Esophagus muscularis mucosa (tissue), 4 donors: ENCODE measurements at regions of chr11 and their contacts with region 1.

Region 1: DNA sequence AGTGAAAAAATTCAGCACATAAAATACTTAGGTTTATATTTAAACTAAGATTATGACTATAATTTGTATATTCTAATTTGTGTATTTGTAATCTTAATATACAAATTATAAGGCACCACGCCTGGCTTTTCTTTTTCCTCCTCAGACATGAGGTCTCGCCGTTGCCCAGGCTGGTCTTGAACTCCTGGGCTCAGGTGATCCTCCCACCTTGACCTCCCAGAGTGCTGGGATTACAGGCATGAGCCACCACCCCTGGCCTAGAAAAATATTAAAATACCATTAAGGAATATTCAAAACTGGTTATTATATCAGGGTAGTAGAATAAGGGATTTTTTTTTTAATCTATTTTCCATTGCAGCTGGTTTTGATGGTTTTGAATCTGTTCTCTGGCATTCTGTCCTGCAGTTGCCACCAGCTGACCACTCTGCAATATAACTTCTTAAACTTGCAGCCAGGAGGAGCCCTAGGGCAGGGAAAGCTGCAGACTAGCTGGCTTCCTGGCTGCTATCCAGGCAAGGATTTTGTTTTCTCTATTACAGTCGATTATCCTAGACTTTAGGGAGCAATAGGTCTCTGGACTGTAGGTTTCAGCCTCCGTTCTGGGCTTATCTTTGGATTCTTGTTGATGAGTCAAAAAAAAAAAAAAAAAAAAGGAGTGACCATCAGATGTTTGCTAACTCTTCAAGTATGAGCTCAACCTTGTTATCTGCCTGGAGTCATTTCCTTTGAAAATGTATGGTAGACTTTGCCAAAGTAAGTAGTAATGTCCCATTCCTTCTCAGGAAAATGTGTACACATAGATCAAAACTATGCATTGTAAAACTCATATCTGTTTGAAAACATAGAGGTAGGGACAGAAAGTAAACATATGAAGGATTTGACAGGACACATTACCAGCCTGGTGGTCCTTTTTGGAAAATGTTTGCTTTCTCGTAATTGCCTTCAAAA is 13.2 kb downstream of the POLA2 start:
- DNase-seq: no peak
- H3K4me3 ChIP-seq: no peak overlapping the region
- H3K27ac ChIP-seq: peak overlapping the region in 2 of 4 donors; percentile 39 to 43
- H3K4me1 ChIP-seq: peaks cover 22 to 47% (median 43%) of the 10 kb centered on the region in 4 donors
- H3K27me3 ChIP-seq: no peaks in the 10 kb centered on the region
- CTCF ChIP-seq: peak; percentile 74 to 97 (median 75)
- EP300 ChIP-seq: no peak
- POLR2A ChIP-seq: no peak

Region 2: DNA sequence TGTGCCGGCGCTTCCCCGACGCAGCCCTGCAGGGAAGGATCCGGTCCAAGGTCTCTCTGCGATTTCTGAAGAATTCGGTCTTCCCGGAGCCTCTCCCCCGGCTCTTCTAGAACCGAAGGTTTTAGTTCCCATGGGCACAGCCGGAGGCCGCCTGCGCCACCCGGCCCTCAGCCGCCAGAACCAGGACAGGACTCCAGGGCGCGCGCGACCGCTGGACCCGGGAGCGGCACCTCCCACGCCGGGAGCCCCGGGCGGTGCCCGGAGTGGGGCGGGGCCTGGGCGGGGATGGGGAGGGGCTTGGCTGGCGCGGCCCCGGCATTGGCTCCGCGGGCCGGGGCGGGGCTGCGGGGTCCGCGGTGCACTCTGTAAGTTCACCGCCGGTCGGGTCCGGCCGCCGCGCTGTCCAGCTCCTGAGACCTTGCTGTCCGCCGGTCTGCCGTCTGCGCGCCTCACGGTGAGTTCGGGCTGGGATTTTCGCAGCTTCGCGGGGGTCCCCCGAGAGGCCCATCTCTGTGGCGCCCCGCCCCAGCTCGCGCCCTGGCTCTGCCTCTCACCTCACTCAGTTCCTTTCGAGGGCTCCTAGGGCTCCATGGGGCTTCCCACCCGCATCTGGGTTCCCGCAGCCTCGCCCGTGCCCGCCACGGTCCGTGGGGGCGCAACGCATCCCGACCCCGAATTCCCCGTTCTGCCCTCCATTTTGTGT is 39.6 kb after region 1 on chr11 and contains the start of gene CDC42EP2:
- intact Hi-C with region 1: loop called (anchors 1 kb)
- DNase-seq: peak; percentile 95
- H3K4me3 ChIP-seq: peak within 1 kb of the TSS; percentile 87 to 100 (median 88)
- H3K27ac ChIP-seq: peak within 1 kb of the TSS; percentile 95 to 97 (median 96)
- H3K4me1 ChIP-seq: peaks cover 48 to 88% (median 86%) of the 10 kb centered on the region in 4 donors
- H3K27me3 ChIP-seq: no peaks in the 10 kb centered on the region
- CTCF ChIP-seq: peak in 1 of 3 experiments; percentile 4
- EP300 ChIP-seq: no peak
- POLR2A ChIP-seq: no peak
- total RNA-seq, gene CDC42EP2: 39.9 to 90.1 (median 54.4) TPM

Region 3: DNA sequence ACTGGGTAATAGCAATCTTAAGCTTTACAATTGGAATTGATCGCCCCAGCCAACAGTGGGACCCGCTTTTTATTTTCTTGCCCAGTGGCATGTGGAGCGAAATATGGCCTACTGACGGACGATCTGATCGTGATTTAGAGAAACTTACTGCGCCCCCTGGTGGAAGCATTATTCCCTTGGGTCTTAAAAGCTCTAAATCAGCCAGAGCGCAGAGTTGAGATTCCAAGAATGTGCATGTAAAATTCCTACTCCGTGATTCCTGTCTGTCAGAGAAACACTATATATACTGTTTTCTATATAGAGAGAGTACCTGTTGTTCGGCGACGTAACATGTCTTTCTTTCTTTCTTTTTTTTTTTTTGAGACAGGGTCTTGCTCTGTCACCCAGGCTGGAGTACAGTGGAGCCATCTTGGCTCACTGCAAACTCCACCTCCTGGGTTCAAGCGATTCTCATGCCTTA is 55.0 kb after region 1 on chr11:
- intact Hi-C with region 1: loop called (anchors 1 kb)
- DNase-seq: peak; percentile 97
- H3K4me3 ChIP-seq: no peak overlapping the region
- H3K27ac ChIP-seq: peak overlapping the region in 2 of 4 donors; percentile 4 to 22
- H3K4me1 ChIP-seq: peaks cover 12 to 24% (median 19%) of the 10 kb centered on the region in 4 donors
- H3K27me3 ChIP-seq: no peaks in the 10 kb centered on the region
- CTCF ChIP-seq: peak; percentile 81 to 85 (median 82)
- EP300 ChIP-seq: no peak
- POLR2A ChIP-seq: no peak